Activated CD4-positive, alpha-beta memory T cell treated with anti-CD3 and anti-CD28 coated beads for 36 hours (primary cell): ENCODE measurements at regions of chr1 and their contacts with region 1.

Region 1: DNA sequence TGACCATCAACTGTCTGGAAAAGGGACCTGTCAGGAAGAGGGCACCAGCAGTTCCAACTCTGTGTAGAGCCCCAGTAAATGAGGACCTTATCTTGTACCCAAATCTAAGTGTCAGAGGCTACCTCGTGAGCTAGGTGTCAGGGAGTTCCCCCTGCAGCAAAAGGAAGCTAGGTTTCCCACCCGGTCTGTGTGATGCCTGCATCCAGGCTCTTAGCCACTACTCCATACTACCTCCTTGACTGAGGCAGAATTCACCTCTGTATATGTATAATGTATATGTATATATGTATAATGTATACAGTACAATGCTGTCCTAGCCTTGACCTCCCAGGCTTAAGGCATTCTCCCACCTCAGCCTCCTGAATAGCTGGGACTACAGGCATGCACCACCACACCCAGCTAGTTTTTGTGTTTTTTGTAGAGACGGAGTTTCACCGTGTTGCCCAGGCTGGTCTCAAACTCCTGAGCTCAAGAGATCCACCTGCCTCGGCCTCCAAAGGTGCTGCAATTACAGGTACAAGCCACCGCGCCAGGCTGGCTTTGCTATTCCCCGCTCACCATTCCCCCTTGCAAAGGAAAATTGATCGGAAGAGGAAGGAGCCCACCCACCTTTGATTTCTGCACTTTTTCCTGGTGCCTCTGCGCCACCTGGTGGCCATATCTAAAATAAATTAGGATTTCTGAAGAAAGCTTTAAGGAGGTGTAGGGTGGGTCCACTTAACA is 15.7 kb upstream of the LUZP1 start:
- DNase-seq: peak; percentile 22
- H3K4me3 Mint-ChIP-seq: peak overlapping the region; percentile 55
- H3K27ac Mint-ChIP-seq: no peak overlapping the region
- H3K4me1 Mint-ChIP-seq: peaks cover 5% of the 10 kb centered on the region
- H3K27me3 Mint-ChIP-seq: peaks cover 4% of the 10 kb centered on the region

Region 2: GRCh38 chr1:23019094-23019862 is 165.1 kb before region 1 on chr1 and contains the start of gene KDM1A:
- CTCF ChIA-PET with region 1: interaction called, 18 read pairs
- POLR2A ChIA-PET with region 1: interaction called, 3 read pairs
- intact Hi-C with region 1: no loop called
- DNase-seq: peak; percentile 96
- H3K4me3 Mint-ChIP-seq: peak within 1 kb of the TSS; percentile 90
- H3K27ac Mint-ChIP-seq: peak within 1 kb of the TSS; percentile 81
- H3K4me1 Mint-ChIP-seq: peaks cover 39% of the 10 kb centered on the region
- H3K27me3 Mint-ChIP-seq: no peaks in the 10 kb centered on the region
- total RNA-seq, gene KDM1A: 60.2 to 61.9 TPM

Region 3: GRCh38 chr1:23098463-23099170 is 85.8 kb before region 1 on chr1:
- CTCF ChIA-PET with region 1: interaction called, 738 read pairs
- POLR2A ChIA-PET with region 1: interaction called, 19 read pairs
- intact Hi-C with region 1: loop called (anchors 1 kb)
- DNase-seq: peak; percentile 72
- H3K4me3 Mint-ChIP-seq: no peak overlapping the region
- H3K27ac Mint-ChIP-seq: no peak overlapping the region
- H3K4me1 Mint-ChIP-seq: peaks cover 46% of the 10 kb centered on the region
- H3K27me3 Mint-ChIP-seq: no peaks in the 10 kb centered on the region

Region 4: DNA sequence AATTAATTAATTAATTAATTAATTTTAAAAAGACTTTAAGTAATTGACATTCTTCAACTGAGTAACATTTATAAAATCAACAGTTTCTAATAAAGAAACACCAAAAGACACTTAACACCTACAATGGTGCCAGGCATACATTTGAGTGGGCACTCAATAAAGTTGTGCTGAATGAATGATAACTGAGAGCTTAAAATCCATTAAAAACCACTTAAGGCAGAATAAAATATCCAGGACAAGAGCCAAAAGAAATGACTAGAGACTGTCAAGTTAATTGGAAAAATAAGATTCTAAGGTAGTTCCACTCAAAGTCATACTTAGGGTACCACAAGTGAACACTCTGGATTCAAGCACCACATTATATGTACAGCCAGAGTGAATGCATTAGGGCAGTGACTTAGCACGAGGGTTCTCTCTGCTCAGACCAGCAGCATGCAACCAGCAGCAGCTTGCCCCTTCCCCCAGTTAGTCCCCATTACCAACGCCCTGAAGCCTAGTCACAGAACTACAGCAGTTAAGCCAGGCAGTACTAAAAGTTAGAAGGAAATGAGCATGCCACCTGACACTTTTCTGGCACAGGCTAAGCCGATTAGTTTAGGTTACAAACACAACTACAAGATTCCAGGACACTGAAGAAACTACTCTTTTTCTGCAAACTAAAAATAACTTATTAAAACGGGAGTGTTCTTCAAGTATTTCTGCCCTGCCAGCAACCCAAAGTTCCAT is 62.2 kb before region 1 on chr1:
- CTCF ChIA-PET with region 1: interaction called, 34 read pairs
- POLR2A ChIA-PET with region 1: no interaction called
- intact Hi-C with region 1: no loop called
- DNase-seq: no peak
- H3K4me3 Mint-ChIP-seq: no peak overlapping the region
- H3K27ac Mint-ChIP-seq: peak overlapping the region; percentile 18
- H3K4me1 Mint-ChIP-seq: peaks cover 67% of the 10 kb centered on the region
- H3K27me3 Mint-ChIP-seq: no peaks in the 10 kb centered on the region

Region 5: GRCh38 chr1:23149114-23149513 is 35.3 kb before region 1 on chr1:
- CTCF ChIA-PET with region 1: interaction called, 10 read pairs
- POLR2A ChIA-PET with region 1: no interaction called
- intact Hi-C with region 1: no loop called
- DNase-seq: no peak
- H3K4me3 Mint-ChIP-seq: no peak overlapping the region
- H3K27ac Mint-ChIP-seq: no peak overlapping the region
- H3K4me1 Mint-ChIP-seq: peaks cover 19% of the 10 kb centered on the region
- H3K27me3 Mint-ChIP-seq: no peaks in the 10 kb centered on the region

Region 6: GRCh38 chr1:23168457-23169194 is 15.7 kb before region 1 on chr1 and contains the start of gene LUZP1:
- CTCF ChIA-PET with region 1: interaction called, 32 read pairs
- POLR2A ChIA-PET with region 1: interaction called, 12 read pairs
- intact Hi-C with region 1: no loop called
- DNase-seq: peak; percentile 91
- H3K4me3 Mint-ChIP-seq: peak within 1 kb of the TSS; percentile 96
- H3K27ac Mint-ChIP-seq: peak within 1 kb of the TSS; percentile 85
- H3K4me1 Mint-ChIP-seq: peaks cover 26% of the 10 kb centered on the region
- H3K27me3 Mint-ChIP-seq: no peaks in the 10 kb centered on the region
- total RNA-seq, gene LUZP1: 19.0 to 21.2 TPM